ENCODE measurements at regions of chr11 and their contacts with region 1.

Region 1: DNA sequence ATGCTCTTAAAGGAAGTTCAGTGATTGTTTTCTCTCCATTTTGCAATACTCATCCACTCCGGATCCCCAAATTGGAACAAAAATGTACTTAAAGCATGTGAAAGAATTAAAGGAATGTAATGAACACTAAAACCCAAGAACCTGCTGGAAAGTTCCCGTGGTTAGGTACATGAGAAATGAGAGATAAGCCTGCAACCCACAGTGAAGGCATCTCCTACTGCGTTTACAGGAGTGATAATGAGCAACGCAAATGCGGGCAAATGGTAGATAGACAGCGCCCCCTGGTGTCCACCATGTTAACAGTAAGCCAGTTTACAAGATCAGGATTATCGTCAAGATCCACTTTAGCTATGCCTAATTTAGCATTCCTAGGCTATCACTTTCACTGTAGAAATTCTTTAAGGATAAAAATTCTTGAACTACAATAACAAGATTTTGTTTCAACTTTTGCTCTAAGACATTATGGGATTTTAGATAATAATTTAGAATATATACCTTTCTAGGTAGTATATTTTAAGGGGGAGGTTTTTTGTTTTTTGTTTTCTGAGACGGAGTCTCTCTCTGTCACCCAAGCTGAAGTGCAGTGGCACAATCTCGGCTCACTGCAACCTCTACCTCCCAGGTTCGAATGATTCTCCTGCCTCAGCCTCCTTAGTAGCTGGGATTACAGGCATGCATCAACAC is 29.9 kb downstream of the ALG9 start:
- DNase-seq: peak; percentile 69 to 97 (median 86)
- ATAC-seq: peak; percentile 98
- H3K4me3 ChIP-seq: no peak overlapping the region
- H3K4me1 ChIP-seq: no peaks in the 10 kb centered on the region
- CTCF ChIP-seq: peak; percentile 59

Region 2: GRCh38 chr11:111565114-111565720 is 276.3 kb before region 1 on chr11:
- intact Hi-C with region 1: loop called (anchors 10 kb)
- DNase-seq: peak in 2 of 3 donors; percentile 37 to 86
- ATAC-seq: peak; percentile 65
- H3K4me3 ChIP-seq: no peak overlapping the region
- H3K4me1 ChIP-seq: no peaks in the 10 kb centered on the region
- CTCF ChIP-seq: peak; percentile 84

Region 3: GRCh38 chr11:111586388-111586831 is 255.1 kb before region 1 on chr11:
- intact Hi-C with region 1: loop called in 1 of 2 experiments (anchors 10 kb)
- DNase-seq: peak in 1 of 3 donors; percentile 84
- ATAC-seq: peak; percentile 57
- H3K4me3 ChIP-seq: no peak overlapping the region
- H3K4me1 ChIP-seq: no peaks in the 10 kb centered on the region
- CTCF ChIP-seq: no peak

Region 4: GRCh38 chr11:111788051-111788450 is 53.5 kb before region 1 on chr11:
- intact Hi-C with region 1: loop called in 1 of 2 experiments (anchors 10 kb)
- DNase-seq: no peak
- ATAC-seq: no peak
- H3K4me3 ChIP-seq: no peak overlapping the region
- H3K4me1 ChIP-seq: no peaks in the 10 kb centered on the region
- CTCF ChIP-seq: no peak

Region 5: DNA sequence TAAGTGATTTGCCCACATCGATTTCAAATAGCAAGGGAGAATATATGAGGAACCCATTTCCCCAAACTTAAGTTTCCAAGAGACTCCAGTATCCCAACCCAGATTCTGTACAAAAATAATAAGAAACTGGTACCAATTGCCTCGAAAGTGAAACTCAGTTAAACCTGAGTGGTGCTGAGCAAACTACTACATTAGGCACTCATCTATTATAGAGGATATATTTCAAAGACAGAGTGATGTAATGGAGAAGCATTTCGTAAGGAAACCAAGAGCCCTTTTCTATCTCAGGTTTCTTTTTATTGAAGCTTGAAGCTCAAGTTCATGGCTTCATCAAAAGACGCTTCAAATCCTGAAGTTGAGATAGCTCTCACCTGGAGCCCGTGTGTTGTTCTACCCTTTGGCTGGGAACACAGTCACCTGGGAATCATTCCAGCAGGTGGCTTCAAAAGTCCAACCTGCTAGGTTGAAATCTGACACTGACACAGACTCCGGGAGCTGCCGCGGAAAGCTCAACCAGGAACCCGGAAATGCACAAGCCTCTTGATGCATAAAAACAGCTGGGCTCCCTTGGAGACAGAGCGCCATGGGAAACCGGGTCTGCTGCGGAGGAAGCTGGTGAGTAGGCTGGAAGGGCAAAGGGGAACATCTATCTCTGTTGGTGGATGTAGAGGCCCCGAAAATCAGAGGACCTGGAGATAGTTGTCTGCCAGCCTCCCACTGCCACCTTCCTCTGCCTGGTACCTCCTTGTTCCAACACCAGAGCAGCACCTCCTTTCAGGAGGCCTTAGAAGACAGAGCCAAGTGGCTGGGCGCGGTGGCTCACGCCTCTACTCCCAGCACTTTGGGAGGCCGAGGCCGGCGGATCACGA is 77.1 kb after region 1 on chr11 and contains the start of gene C11orf52:
- intact Hi-C with region 1: no loop called
- DNase-seq: peak; percentile 78 to 84 (median 82)
- ATAC-seq: peak; percentile 96
- H3K4me3 ChIP-seq: no peak within 1 kb of the TSS
- H3K4me1 ChIP-seq: peaks cover 6% of the 10 kb centered on the region
- CTCF ChIP-seq: no peak
- total RNA-seq, gene C11orf52: 3.2 to 12.8 (median 7.7) TPM